WTC11 (cell line): ENCODE measurements at regions of chr7 and their contacts with region 1.

Region 1: DNA sequence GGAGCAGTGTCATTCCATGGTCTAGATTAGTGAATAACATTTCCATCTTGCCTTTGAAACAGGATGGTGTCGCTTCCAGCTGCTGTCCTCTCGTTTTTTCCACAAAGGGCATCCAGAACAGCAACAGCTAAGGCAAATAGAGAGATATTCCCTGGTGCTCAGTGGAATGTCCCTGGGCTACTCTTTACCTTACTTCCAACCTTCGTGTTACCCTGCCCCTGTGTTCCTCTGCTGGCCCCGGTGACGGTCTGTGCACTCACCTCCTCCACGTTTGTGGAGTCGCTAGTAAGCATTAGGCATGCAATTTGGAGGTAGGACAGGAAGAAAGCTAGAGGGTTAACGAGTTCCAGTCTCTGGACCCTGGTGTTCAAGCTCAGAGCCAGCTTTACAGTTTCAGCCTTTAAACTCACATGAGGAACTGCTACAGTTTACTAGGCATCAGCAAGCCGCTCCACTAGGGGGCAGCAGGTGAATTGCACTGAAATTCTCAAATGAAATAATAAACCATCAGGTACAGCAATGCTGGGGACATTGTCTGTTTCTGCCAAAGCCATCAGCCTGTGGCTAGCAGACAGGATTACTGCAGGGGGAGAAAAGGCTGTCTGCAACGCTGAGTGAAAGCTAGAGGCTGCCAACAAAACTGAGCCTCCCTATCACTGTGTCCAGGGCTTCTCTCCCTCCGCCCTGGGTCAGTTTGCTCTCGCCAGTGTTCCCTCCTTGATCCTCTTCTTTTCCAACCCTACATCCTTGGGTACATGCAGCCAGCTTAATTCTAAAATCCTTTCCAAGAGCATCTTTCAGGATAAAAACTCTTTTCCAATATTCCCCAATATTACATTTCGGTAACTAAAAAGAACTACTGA is 9.0 kb downstream of the MRPL32 start:
- DNase-seq: peak; percentile 90
- ATAC-seq: peak; percentile 90
- H3K4me3 Mint-ChIP-seq: no peak overlapping the region
- H3K27ac Mint-ChIP-seq: peak overlapping the region; percentile 66; the same call in 1 of the 2 replicates
- H3K4me1 Mint-ChIP-seq: peaks cover 9% of the 10 kb centered on the region
- H3K27me3 Mint-ChIP-seq: no peaks in the 10 kb centered on the region
- CTCF ChIP-seq: peak; percentile 91

Region 2: GRCh38 chr7:42964849-42965805 is 23.9 kb after region 1 on chr7:
- CTCF ChIA-PET with region 1: interaction called, 10 read pairs
- POLR2A ChIA-PET with region 1: no interaction called
- DNase-seq: no peak
- ATAC-seq: peak; percentile 67
- H3K4me3 Mint-ChIP-seq: no peak overlapping the region
- H3K27ac Mint-ChIP-seq: no peak overlapping the region
- H3K4me1 Mint-ChIP-seq: peaks cover 14% of the 10 kb centered on the region
- H3K27me3 Mint-ChIP-seq: no peaks in the 10 kb centered on the region
- CTCF ChIP-seq: no peak

Region 3: DNA sequence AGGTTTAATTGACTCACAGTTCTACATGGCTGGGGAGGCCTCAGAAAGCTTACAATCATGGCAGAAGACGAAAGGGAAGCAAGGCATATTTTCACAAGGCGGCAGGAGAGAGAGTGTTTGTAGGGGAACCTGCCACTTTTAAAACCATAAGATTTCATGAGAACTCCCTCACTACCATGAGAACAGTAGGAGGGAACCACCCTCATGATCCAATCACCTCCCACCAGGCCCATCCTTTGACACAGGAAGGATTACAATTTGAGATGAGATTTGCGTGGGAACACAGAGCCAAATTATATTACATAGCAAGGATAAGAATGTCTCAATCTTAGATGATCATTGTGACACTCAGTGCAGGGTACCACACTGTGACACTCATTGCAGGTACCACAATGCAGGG is 35.2 kb after region 1 on chr7:
- CTCF ChIA-PET with region 1: no interaction called
- POLR2A ChIA-PET with region 1: no interaction called
- DNase-seq: no peak
- ATAC-seq: no peak
- H3K4me3 Mint-ChIP-seq: no peak overlapping the region
- H3K27ac Mint-ChIP-seq: no peak overlapping the region
- H3K4me1 Mint-ChIP-seq: no peaks in the 10 kb centered on the region
- H3K27me3 Mint-ChIP-seq: peaks cover 6% of the 10 kb centered on the region; the same call in 1 of the 2 replicates
- CTCF ChIP-seq: no peak

Region 4: GRCh38 chr7:42993038-42993437 is 51.8 kb after region 1 on chr7:
- CTCF ChIA-PET with region 1: interaction called, 17 read pairs
- POLR2A ChIA-PET with region 1: no interaction called
- DNase-seq: peak; percentile 41
- ATAC-seq: peak; percentile 95
- H3K4me3 Mint-ChIP-seq: no peak overlapping the region
- H3K27ac Mint-ChIP-seq: no peak overlapping the region
- H3K4me1 Mint-ChIP-seq: peaks cover 20% of the 10 kb centered on the region
- H3K27me3 Mint-ChIP-seq: no peaks in the 10 kb centered on the region
- CTCF ChIP-seq: no peak

Region 5: GRCh38 chr7:43108255-43109011 is 167.2 kb after region 1 on chr7:
- CTCF ChIA-PET with region 1: interaction called, 36 read pairs
- POLR2A ChIA-PET with region 1: interaction called, 3 read pairs
- DNase-seq: peak; percentile 93
- ATAC-seq: peak; percentile 83
- H3K4me3 Mint-ChIP-seq: no peak overlapping the region
- H3K27ac Mint-ChIP-seq: peak overlapping the region; percentile 95
- H3K4me1 Mint-ChIP-seq: peaks cover 44% of the 10 kb centered on the region
- H3K27me3 Mint-ChIP-seq: peaks cover 13% of the 10 kb centered on the region
- CTCF ChIP-seq: peak; percentile 84

Region 6: GRCh38 chr7:43260980-43261878 is 320.0 kb after region 1 on chr7:
- CTCF ChIA-PET with region 1: interaction called, 22 read pairs
- POLR2A ChIA-PET with region 1: no interaction called
- DNase-seq: peak; percentile 85
- ATAC-seq: peak; percentile 98
- H3K4me3 Mint-ChIP-seq: no peak overlapping the region
- H3K27ac Mint-ChIP-seq: no peak overlapping the region
- H3K4me1 Mint-ChIP-seq: 0 out of 2 replicates have a peak, but pooled peaks cover 3% of the 10 kb centered on the region
- H3K27me3 Mint-ChIP-seq: no peaks in the 10 kb centered on the region
- CTCF ChIP-seq: peak; percentile 97